Vagina (tissue), 2 donors: ENCODE measurements at regions of chr12 and their contacts with region 1.

Region 1: DNA sequence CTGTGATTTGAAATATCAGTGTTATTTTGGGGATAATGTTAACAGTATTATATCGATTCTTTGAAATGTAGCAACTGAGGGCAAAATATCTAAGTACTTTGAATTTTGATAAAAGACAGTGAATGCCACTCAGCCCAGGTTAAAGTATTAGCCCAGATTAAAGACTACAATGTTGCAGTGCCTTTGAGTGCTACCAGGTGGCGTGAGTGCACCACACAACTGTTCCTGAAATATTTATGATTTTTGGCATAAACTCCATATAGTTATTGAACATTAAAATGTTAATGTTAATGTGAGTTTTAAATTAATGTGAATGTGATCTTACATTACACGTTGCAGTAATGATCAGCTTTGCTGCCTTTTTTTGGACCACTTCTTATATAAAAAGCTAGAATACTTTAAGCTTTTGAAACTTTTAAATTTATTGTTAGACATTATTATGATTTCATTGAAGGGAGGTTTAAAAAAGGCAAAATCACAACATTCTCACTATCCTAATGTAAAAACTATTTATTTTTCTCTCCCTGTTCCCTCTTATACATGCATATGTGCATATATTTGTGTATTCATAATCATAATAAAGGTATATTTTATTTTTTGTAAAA is 22.5 kb downstream of the MRPS35 start:
- DNase-seq: no peak
- H3K4me3 ChIP-seq: no peak overlapping the region
- H3K27ac ChIP-seq: no peak overlapping the region
- H3K4me1 ChIP-seq: no peaks in the 10 kb centered on the region
- H3K27me3 ChIP-seq: no peaks in the 10 kb centered on the region
- CTCF ChIP-seq: peak; percentile 37 to 81 (median 68)
- POLR2A ChIP-seq: no peak

Region 2: GRCh38 chr12:27571463-27571862 is 161.7 kb before region 1 on chr12:
- intact Hi-C with region 1: no loop called
- DNase-seq: no peak
- H3K4me3 ChIP-seq: no peak overlapping the region
- H3K27ac ChIP-seq: no peak overlapping the region
- H3K4me1 ChIP-seq: peaks cover 28% of the 10 kb centered on the region
- H3K27me3 ChIP-seq: no peaks in the 10 kb centered on the region
- CTCF ChIP-seq: no peak
- POLR2A ChIP-seq: no peak

Region 3: DNA sequence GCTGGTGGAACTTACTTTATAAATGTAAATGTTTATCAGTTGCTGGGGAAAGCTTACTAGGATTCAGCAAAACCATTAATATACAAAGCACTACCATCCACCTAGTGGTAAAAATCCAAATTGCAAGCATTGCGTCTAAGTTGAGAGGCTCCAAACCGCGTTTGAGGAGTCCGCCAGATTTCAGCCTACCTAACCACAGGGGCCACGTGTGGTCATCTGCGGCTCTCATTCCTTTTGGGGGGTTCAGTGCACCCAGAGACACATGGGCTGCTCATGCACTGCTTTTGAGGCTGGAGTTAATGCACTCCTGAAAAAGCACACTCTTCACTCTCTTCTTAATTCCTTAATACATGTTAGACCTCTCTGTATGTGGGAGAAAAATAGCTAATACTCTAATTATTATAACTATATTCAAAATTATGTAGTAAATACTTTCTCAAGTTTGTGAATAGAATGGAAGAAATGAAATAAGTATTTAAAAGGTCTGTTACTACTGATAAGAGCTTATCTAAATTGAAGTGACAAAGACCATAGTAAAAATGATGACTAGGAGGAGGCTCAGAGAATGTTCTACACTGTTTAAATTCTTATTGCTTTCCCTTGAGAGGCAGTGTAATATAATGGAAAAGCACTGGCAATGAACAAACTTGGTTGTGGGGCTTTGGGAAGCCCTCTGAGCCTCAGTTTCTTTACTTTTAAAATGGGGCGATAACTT is 88.3 kb after region 1 on chr12:
- intact Hi-C with region 1: loop called (anchors 10 kb)
- DNase-seq: no peak
- H3K4me3 ChIP-seq: no peak overlapping the region
- H3K27ac ChIP-seq: no peak overlapping the region
- H3K4me1 ChIP-seq: no peaks in the 10 kb centered on the region
- H3K27me3 ChIP-seq: no peaks in the 10 kb centered on the region
- CTCF ChIP-seq: peak; percentile 61 to 83 (median 75)
- POLR2A ChIP-seq: no peak

Region 4: DNA sequence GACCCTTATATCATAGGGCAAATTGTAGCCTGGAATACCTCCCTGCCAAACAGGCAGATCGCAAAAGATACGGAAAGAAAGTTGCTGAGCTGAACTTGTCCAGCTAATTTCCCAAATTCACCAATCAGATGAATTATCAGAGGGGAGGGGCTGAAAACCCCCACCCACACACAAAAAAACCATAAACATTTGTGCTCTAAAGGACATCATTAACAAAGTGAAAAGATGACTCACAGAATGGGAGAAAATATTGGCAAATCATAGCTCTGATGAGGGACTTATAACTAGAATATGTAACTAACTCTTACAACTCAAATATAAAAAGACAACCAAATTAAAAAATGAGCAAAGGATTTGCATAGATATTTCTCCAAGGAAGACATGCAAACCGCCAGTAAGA is 203.0 kb after region 1 on chr12:
- intact Hi-C with region 1: loop called (anchors 5 kb)
- DNase-seq: no peak
- H3K4me3 ChIP-seq: no peak overlapping the region
- H3K27ac ChIP-seq: no peak overlapping the region
- H3K4me1 ChIP-seq: no peaks in the 10 kb centered on the region
- H3K27me3 ChIP-seq: no peaks in the 10 kb centered on the region
- CTCF ChIP-seq: no peak
- POLR2A ChIP-seq: no peak